ENCODE measurements at regions of chr9 and their contacts with region 1.

Region 1: DNA sequence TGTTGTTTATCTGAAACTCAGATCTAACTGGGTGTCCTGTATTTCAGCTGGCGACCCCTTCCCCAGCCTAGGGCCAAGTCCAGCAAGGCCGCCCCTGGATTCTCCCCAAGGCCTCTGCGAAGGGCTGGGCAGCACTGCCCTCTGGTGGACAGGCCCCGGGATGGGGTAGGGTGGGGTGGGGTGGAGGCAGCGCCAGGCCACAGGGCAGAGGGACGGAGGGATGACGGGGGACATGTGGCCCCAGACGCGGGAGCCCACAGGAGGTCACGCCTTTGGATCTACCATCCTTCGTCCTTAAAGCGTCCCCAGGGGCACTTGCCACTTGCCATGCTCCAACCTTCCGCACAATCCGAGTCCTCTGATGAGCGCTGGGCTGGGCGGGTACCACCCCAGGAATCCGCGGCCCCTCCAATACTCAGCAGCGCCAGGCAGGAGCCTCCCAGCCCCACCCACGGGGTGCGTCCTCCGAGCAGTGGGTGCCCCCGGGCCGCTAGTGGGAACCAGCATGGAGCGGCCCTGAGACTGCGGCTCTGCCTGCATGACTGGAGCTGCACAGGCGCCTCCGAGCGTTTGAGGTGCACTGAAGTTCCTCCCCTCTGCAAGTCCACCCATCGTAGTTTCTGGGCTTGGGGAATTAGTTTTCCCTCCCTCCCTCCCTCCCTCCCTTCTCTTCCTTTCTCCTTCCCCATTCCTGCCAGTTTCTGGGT is 7.1 kb upstream of the AGPAT2 start:
- DNase-seq: peak; percentile 37
- H3K4me3 ChIP-seq: peak overlapping the region in 1 of 3 experiments; percentile 0
- H3K27ac ChIP-seq: peak overlapping the region; percentile 9
- H3K4me1 ChIP-seq: peaks cover 41% of the 10 kb centered on the region
- H3K27me3 ChIP-seq: no peaks in the 10 kb centered on the region
- CTCF ChIP-seq: peak; percentile 49 to 86

Region 2: DNA sequence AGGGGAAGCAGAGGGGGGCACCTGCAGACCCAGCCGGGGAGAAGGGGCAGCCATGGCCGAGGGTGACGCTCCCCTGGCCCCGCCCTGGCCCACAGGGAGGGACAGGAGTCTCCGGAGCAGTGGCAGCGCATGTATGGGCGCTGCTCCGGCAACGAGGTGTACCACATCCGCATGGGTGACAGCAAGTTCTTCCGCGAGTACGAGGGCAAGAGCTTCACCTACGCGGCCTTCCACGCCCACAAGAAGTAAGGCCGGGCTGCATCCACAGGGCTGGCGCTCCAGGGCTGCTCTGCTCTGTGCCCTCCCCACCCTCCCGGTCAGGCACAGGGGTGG is 924.2 kb before region 1 on chr9:
- CTCF ChIA-PET with region 1: no interaction called
- dilution Hi-C with region 1: no loop called
- in situ Hi-C with region 1: no loop called
- intact Hi-C with region 1: no loop called
- DNase-seq: no peak
- H3K4me3 ChIP-seq: no peak overlapping the region
- H3K27ac ChIP-seq: no peak overlapping the region
- H3K4me1 ChIP-seq: no peaks in the 10 kb centered on the region
- H3K27me3 ChIP-seq: no peaks in the 10 kb centered on the region
- CTCF ChIP-seq: no peak

Region 3: GRCh38 chr9:136728080-136728547 is 33.7 kb after region 1 on chr9:
- CTCF ChIA-PET with region 1: no interaction called
- dilution Hi-C with region 1: no loop called
- in situ Hi-C with region 1: no loop called
- intact Hi-C with region 1: loop called (anchors 5 kb)
- DNase-seq: peak; percentile 80
- H3K4me3 ChIP-seq: peak overlapping the region; percentile 71 to 88 (median 87)
- H3K27ac ChIP-seq: peak overlapping the region; percentile 55
- H3K4me1 ChIP-seq: peaks cover 21% of the 10 kb centered on the region
- H3K27me3 ChIP-seq: no peaks in the 10 kb centered on the region
- CTCF ChIP-seq: peak in 1 of 2 donors; percentile 80

Region 4: DNA sequence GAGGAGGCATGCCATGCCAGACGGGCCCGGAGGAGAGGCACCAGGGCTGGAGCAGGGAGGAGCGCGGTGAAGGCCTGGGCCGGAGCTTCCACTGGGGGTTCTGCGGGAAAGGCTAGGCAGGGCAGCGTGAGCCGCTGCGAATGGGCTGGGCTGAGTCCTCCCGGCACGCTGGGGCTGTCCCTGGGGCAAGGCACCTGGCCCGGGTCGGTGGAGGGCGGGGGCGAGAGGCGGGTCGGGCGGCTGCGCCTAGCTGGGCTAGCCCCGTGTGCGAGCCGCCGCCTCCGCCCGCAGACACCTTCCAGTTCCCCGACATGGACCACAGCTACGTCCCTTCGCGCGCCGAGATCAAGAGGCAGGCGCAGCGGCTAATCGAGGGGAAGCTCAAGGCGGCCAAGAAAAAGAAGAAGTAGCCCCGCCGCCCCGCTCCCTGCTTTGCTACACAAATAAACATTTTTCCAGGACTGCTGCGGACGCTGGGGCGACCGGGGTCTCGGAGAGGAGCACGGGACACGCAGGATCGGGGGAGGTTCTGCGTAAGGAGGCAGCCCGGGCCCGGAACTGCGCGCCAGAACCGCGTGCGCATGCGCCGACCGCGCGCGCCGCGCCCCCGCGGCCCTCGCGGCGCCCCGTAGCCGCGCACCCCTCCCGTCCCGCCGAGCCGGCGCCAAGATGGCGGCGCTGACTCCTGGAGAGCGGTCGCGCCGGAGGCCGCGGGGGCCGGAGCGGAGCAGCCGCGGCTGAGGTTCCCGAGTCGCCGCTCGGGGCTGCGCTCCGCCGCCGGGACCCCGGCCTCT is 113.1 kb after region 1 on chr9 and contains the start of gene RABL6:
- CTCF ChIA-PET with region 1: no interaction called
- dilution Hi-C with region 1: no loop called
- in situ Hi-C with region 1: no loop called
- intact Hi-C with region 1: no loop called
- DNase-seq: peak; percentile 66
- H3K4me3 ChIP-seq: peak within 1 kb of the TSS; percentile 74 to 93 (median 87)
- H3K27ac ChIP-seq: peak within 1 kb of the TSS; percentile 39
- H3K4me1 ChIP-seq: peaks cover 24% of the 10 kb centered on the region
- H3K27me3 ChIP-seq: no peaks in the 10 kb centered on the region
- CTCF ChIP-seq: no peak
- total RNA-seq, gene RABL6: 53.8 to 84.3 TPM

Region 5: GRCh38 chr9:136916330-136917184 is 222.2 kb after region 1 on chr9:
- CTCF ChIA-PET with region 1: no interaction called
- dilution Hi-C with region 1: no loop called
- in situ Hi-C with region 1: no loop called
- intact Hi-C with region 1: no loop called
- DNase-seq: no peak
- H3K4me3 ChIP-seq: no peak overlapping the region
- H3K27ac ChIP-seq: no peak overlapping the region
- H3K4me1 ChIP-seq: no peaks in the 10 kb centered on the region
- H3K27me3 ChIP-seq: no peaks in the 10 kb centered on the region
- CTCF ChIP-seq: no peak

Measured in mammary epithelial cell (primary cell).